B cell (primary cell): ENCODE measurements at regions of chr20 and their contacts with region 1.

Region 1: DNA sequence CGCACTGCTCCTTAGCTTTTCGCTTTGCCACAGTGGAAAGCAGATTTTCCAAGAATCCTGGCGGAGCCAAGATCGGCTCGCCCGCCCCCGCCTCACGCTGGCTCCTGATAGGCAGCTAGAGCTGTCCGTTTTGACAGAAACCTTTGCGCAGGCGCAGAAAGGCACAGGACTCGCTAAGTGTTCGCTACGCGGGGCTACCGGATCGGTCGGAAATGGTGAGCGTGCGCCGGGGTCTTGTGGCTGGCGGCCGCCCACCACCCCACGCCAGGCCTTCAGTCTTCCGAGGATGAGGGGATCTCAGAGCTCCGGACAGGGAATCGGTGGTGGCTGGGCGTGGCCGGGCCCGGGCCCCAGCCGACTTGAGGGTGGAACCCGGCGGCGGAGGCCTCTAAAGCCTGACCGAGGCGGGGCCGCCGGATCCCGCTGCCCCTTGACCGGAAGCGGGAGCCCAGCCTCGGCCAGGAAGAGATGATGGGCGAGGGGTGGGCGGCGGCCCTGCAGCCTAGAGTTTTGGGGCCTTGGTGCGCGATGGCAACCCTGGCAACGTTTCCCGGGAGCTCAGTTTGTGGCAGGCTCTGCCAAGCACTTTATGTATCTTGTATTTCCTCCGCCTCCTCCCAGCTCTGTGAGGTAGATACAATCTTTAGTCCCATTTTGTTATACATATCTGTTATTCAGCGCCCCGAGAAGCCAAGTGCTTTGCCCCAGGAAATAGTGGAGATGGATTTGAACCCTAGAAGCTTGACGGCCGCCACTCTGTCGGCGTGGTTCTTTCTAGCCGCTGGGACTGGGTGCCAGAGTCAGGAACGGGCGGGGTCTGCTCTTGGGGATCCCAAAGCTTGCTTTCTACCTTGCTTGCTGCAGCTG is at the start of gene DYNLRB1:
- DNase-seq: peak; percentile 95
- ATAC-seq: peak; percentile 83
- H3K4me3 ChIP-seq: peak within 1 kb of the TSS; percentile 66 to 99 (median 95)
- H3K4me3 Mint-ChIP-seq: peak within 1 kb of the TSS; percentile 97
- H3K27ac ChIP-seq: peak within 1 kb of the TSS; percentile 31 to 85
- H3K27ac Mint-ChIP-seq: peak within 1 kb of the TSS; percentile 97
- H3K4me1 ChIP-seq: peaks cover 5 to 10% of the 10 kb centered on the region in 2 donors
- H3K4me1 Mint-ChIP-seq: peaks cover 47% of the 10 kb centered on the region
- H3K27me3 ChIP-seq: no peaks in the 10 kb centered on the region
- H3K27me3 Mint-ChIP-seq: no peaks in the 10 kb centered on the region
- CTCF ChIP-seq: no peak
- total RNA-seq, gene DYNLRB1: 43.8 and 55.3 TPM in 2 replicates

Region 2: GRCh38 chr20:34111702-34112599 is 404.5 kb before region 1 on chr20 and contains the start of gene EIF2S2:
- CTCF ChIA-PET with region 1: no interaction called
- POLR2A ChIA-PET with region 1: no interaction called
- intact Hi-C with region 1: loop called (anchors 5 kb)
- DNase-seq: peak; percentile 99
- ATAC-seq: peak; percentile 91
- H3K4me3 ChIP-seq: peak within 1 kb of the TSS; percentile 63 to 97 (median 90)
- H3K4me3 Mint-ChIP-seq: peak within 1 kb of the TSS; percentile 99
- H3K27ac ChIP-seq: peak within 1 kb of the TSS; percentile 80 to 95
- H3K27ac Mint-ChIP-seq: peak within 1 kb of the TSS; percentile 99
- H3K4me1 ChIP-seq: peaks cover 21 to 28% of the 10 kb centered on the region in 2 donors
- H3K4me1 Mint-ChIP-seq: peaks cover 45% of the 10 kb centered on the region
- H3K27me3 ChIP-seq: no peaks in the 10 kb centered on the region
- H3K27me3 Mint-ChIP-seq: no peaks in the 10 kb centered on the region
- CTCF ChIP-seq: no peak
- total RNA-seq, gene EIF2S2: 26.4 and 27.7 TPM in 2 replicates

Region 3: DNA sequence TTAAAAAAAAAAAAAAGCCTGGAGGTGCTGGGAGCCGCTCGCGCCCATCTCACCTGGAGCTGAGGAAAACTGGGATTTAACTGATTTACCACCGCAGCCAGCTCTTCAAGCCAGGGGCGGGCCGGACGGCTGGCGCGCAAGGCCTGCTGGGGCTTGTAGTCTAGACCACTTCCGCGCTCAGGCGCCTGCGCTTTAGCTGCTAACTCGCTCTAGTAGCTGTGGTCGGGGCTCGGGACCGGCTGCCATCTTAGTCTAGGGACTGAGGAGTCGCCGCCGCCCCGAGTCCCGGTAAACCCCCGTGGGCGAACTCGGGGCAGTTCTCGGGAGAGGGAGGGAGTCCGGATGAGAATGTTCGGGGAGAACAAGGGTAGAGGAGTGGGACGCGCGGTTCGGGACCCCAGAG is 153.4 kb before region 1 on chr20 and contains the start of gene ITCH:
- CTCF ChIA-PET with region 1: interaction called, 3 read pairs
- POLR2A ChIA-PET with region 1: interaction called, 4 read pairs
- intact Hi-C with region 1: loop called (anchors 1 kb)
- DNase-seq: peak; percentile 94
- ATAC-seq: peak; percentile 96
- H3K4me3 ChIP-seq: peak within 1 kb of the TSS; percentile 46 to 91 (median 88)
- H3K4me3 Mint-ChIP-seq: peak within 1 kb of the TSS; percentile 97
- H3K27ac ChIP-seq: peak within 1 kb of the TSS; percentile 81 to 96
- H3K27ac Mint-ChIP-seq: peak within 1 kb of the TSS; percentile 98
- H3K4me1 ChIP-seq: peaks cover 34 to 38% of the 10 kb centered on the region in 2 donors
- H3K4me1 Mint-ChIP-seq: peaks cover 35% of the 10 kb centered on the region
- H3K27me3 ChIP-seq: no peaks in the 10 kb centered on the region
- H3K27me3 Mint-ChIP-seq: no peaks in the 10 kb centered on the region
- CTCF ChIP-seq: no peak
- total RNA-seq, gene ITCH: 89.6 and 110 TPM in 2 replicates

Region 4: DNA sequence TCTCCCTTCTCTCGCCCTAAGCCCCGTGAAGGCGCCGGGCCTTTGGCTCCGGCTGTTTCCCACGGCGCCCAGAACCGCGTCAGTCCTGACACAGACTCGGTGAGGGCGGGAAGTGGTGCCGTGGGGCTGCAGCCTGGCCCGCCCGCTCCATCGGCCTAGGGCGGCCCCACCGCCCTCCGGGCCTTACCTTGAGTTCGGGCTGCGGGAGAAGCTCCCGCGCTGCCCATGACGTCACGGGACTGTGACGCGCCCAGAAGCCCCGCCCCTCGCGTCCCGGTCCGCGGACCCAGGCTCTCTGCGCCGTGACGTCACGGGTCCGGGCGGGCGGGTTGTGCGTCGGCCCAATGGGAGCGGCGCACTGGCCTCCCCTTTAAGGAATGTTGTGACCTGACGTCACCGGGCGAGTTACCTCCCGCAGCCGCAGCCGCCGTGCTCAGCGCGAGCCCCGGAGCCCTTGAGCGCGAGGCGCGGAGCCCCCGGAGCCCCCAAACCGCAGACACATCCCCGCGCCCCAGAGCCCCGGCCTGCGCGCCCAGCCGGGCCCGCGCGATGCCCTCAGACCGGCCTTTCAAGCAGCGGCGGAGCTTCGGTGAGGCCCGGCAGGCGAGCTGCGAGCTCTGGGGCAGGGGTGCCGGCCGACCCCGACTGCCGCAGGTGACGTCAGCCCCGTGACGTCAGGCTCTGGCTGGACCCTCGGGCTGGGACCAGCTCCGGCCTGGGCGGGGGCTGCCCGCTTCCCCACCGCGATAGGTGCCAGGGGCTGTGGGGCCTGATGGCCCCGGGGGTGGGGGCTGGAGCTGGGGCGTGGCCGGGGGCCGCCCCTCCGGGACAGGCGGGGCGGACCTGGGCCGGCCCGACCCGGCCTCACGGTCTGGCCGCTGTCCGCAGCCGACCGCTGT is 42.1 kb after region 1 on chr20 and contains the start of gene MAP1LC3A:
- CTCF ChIA-PET with region 1: interaction called, 5 read pairs
- POLR2A ChIA-PET with region 1: no interaction called
- intact Hi-C with region 1: loop called (anchors 1 kb)
- DNase-seq: peak; percentile 98
- ATAC-seq: peak; percentile 89
- H3K4me3 ChIP-seq: peak within 1 kb of the TSS; percentile 50 to 94 (median 77)
- H3K4me3 Mint-ChIP-seq: peak within 1 kb of the TSS; percentile 85
- H3K27ac ChIP-seq: peak within 1 kb of the TSS; percentile 72 to 86
- H3K27ac Mint-ChIP-seq: peak within 1 kb of the TSS; percentile 92
- H3K4me1 ChIP-seq: peaks cover 8 to 14% of the 10 kb centered on the region in 2 donors
- H3K4me1 Mint-ChIP-seq: peaks cover 13% of the 10 kb centered on the region
- H3K27me3 ChIP-seq: no peaks in the 10 kb centered on the region
- H3K27me3 Mint-ChIP-seq: no peaks in the 10 kb centered on the region
- CTCF ChIP-seq: no peak
- total RNA-seq, gene MAP1LC3A: 3.5 and 4.5 TPM in 2 replicates